ENCODE measurements at regions of chr6 and their contacts with region 1.

Region 1: GRCh38 chr6:109526905-109527628 is 44.0 kb upstream of the ZBTB24 start:
- DNase-seq: peak; percentile 44
- H3K4me3 ChIP-seq: no peak overlapping the region
- H3K27ac ChIP-seq: no peak overlapping the region
- H3K4me1 ChIP-seq: no peaks in the 10 kb centered on the region
- H3K27me3 ChIP-seq: peaks cover 4% of the 10 kb centered on the region
- CTCF ChIP-seq: peak; percentile 34 to 65

Region 2: GRCh38 chr6:107674995-107675738 is 1851.9 kb before region 1 on chr6:
- CTCF ChIA-PET with region 1: no interaction called
- dilution Hi-C with region 1: no loop called
- in situ Hi-C with region 1: no loop called
- intact Hi-C with region 1: no loop called
- DNase-seq: peak; percentile 71
- H3K4me3 ChIP-seq: peak overlapping the region in 2 of 3 experiments; percentile 9 to 42
- H3K27ac ChIP-seq: no peak overlapping the region
- H3K4me1 ChIP-seq: no peaks in the 10 kb centered on the region
- H3K27me3 ChIP-seq: no peaks in the 10 kb centered on the region
- CTCF ChIP-seq: peak; percentile 80 to 93

Region 3: DNA sequence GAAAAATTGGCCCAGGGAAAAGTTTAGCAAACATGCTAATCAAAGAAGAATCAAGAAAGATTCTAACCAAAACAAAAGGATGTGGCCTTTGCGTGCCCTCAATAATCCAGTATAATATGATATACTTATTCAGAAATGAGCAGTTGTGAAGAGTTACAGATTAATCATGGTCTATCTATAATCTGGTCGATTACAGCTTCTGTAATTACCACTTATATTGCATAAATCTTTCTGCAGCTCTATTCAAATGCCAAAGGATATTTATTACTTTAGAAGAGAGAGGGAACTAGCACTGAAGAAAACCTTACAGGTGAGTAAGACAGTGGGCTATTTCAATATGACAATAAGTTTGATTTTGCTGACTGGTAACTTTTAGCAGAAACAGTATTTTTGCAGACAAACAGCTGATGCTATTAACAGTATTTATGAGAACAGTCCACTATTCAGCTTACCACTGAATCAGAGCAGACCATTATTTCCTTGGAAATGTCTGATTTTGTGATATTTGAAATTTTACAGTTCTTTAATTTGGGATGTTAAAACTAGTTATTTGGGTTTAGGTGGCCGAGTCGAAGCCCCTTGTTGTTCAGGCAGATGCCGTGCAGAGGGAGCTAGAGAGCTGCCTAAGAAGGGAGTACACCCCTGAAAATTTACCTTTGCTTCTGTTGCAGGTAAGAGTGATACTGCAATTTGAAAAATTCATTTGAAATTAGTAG is 339.5 kb before region 1 on chr6:
- CTCF ChIA-PET with region 1: no interaction called
- dilution Hi-C with region 1: no loop called
- in situ Hi-C with region 1: no loop called
- intact Hi-C with region 1: loop called (anchors 10 kb)
- DNase-seq: peak; percentile 16
- H3K4me3 ChIP-seq: no peak overlapping the region
- H3K27ac ChIP-seq: no peak overlapping the region
- H3K4me1 ChIP-seq: no peaks in the 10 kb centered on the region
- H3K27me3 ChIP-seq: peaks cover 2% of the 10 kb centered on the region
- CTCF ChIP-seq: peak; percentile 88 to 98

Region 4: DNA sequence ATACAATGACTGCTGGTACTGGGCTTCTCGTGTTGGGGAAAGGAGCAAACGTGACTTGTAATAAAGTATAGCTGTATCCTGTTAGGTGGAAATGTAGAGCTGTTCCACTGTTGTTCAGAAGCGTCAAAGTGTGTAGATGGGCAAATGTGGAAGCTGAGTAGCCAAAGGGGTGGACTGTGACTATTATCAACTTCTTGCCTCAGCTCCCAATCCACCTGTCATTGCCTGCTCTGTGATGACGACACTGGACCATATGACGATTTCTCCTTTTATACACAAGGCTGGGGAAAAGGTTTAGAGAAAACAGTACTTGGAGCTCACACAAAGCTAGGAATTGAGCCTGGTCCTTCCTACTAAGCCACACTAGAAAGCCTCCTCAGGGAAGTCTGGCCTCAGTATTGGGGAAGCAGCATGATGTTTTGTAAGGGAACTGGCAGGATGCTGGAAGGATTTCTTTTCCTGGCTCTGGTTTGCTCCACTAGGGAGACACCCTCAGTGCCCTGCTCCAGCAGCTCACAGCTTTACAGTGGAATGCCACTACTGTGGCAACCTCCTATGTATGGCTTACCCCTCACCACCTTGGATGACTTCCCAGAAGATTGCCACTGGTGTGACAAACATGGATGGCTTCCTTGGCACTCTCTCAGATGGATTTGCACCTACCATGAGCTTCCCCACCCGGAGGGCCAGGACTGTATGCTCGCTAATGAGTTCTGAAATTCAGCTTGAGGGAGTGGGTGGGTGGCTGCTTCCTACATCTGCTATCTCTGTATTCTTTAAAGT is 164.8 kb before region 1 on chr6:
- CTCF ChIA-PET with region 1: no interaction called
- dilution Hi-C with region 1: no loop called
- in situ Hi-C with region 1: no loop called
- intact Hi-C with region 1: no loop called
- DNase-seq: no peak
- H3K4me3 ChIP-seq: no peak overlapping the region
- H3K27ac ChIP-seq: no peak overlapping the region
- H3K4me1 ChIP-seq: no peaks in the 10 kb centered on the region
- H3K27me3 ChIP-seq: no peaks in the 10 kb centered on the region
- CTCF ChIP-seq: no peak

Region 5: GRCh38 chr6:109455502-109456282 is 71.4 kb before region 1 on chr6 and contains the start of gene MICAL1:
- CTCF ChIA-PET with region 1: no interaction called
- dilution Hi-C with region 1: no loop called
- in situ Hi-C with region 1: no loop called
- intact Hi-C with region 1: no loop called
- DNase-seq: peak; percentile 38
- H3K4me3 ChIP-seq: peak within 1 kb of the TSS; percentile 78 to 96 (median 90)
- H3K27ac ChIP-seq: peak within 1 kb of the TSS; percentile 22
- H3K4me1 ChIP-seq: peaks cover 10% of the 10 kb centered on the region
- H3K27me3 ChIP-seq: no peaks in the 10 kb centered on the region
- CTCF ChIP-seq: peak in 1 of 2 donors; percentile 21
- total RNA-seq, gene MICAL1: 36.3 to 44.0 TPM

Region 6: DNA sequence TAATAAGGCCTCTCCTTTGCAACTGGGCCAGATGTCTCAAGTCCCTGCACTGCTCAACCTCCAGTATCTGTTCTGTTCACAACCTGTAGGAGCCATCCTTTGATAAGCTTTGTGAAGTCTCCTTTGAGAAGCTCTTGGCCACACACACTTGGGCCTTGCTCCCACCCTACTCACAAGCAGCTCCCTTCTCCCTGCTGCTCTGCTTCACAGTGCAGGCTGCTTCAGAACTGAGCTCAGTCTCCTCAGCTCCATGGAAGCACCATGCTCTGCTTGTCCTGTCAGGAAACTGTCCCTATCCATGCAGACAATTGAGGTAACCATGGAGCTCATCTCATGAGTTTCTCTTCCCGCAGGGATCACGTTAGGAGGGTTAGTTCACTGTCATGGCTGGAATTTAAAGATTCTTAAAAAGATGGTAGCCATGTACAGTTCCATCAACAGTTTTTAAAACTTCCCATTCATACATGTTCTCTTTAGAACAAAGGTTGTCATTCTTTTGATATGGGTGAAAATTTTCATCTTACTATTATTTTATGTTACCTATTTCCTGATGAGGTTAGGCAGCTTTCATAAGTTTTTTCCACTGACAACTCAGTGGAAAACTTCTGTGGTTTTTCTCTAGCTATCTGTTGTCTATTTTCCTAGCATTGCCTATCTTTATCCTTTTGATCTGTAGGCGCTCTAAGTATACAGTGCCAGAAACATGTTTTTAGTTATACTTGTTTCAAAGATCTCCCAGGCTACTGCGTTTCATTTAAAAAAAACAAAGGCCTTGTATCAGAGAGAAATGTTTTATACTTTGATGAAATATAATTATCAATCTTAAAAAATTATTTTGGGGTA is 101.3 kb after region 1 on chr6:
- CTCF ChIA-PET with region 1: no interaction called
- dilution Hi-C with region 1: no loop called
- in situ Hi-C with region 1: no loop called
- intact Hi-C with region 1: no loop called
- DNase-seq: no peak
- H3K4me3 ChIP-seq: no peak overlapping the region
- H3K27ac ChIP-seq: no peak overlapping the region
- H3K4me1 ChIP-seq: no peaks in the 10 kb centered on the region
- H3K27me3 ChIP-seq: no peaks in the 10 kb centered on the region
- CTCF ChIP-seq: no peak

Region 7: GRCh38 chr6:109690737-109691621 is 163.9 kb after region 1 on chr6 and contains the starts of genes AK9 and FIG4:
- CTCF ChIA-PET with region 1: no interaction called
- dilution Hi-C with region 1: no loop called
- in situ Hi-C with region 1: no loop called
- intact Hi-C with region 1: loop called (anchors 2 kb)
- DNase-seq: peak; percentile 90
- H3K4me3 ChIP-seq: peak within 1 kb of the TSS; percentile 77 to 94 (median 78)
- H3K27ac ChIP-seq: peak within 1 kb of the TSS; percentile 52
- H3K4me1 ChIP-seq: peaks cover 28% of the 10 kb centered on the region
- H3K27me3 ChIP-seq: no peaks in the 10 kb centered on the region
- CTCF ChIP-seq: peak in 1 of 2 donors; percentile 42
- total RNA-seq, gene AK9: 2.2 to 2.4 TPM
- total RNA-seq, gene FIG4: 12.2 to 17.2 TPM

Region 8: GRCh38 chr6:110053395-110054240 is 526.6 kb after region 1 on chr6:
- CTCF ChIA-PET with region 1: no interaction called
- dilution Hi-C with region 1: no loop called
- in situ Hi-C with region 1: loop called (anchors 10 to 25 kb)
- intact Hi-C with region 1: loop called (anchors 1 kb)
- DNase-seq: peak; percentile 29
- H3K4me3 ChIP-seq: no peak overlapping the region
- H3K27ac ChIP-seq: no peak overlapping the region
- H3K4me1 ChIP-seq: no peaks in the 10 kb centered on the region
- H3K27me3 ChIP-seq: peaks cover 7% of the 10 kb centered on the region
- CTCF ChIP-seq: peak; percentile 77 to 78

Region 9: DNA sequence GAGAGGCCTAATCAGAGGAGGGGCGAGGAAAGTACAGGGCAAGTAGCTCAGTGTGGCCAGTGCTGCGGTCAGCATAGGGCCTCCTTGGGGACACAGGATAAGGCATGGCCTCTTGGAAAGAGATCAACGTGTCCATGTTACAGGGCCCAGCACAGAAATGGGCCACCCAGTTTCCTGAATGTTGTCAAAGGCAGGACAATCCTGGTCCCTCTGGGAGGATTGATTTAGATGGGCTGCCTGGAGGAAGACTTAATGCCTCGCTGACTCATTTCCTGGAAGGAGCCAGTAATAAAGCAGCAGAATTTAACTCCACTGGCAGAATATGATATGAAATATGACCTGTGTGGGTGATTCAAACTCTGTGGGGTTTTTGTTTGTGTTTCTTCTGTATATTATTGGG is 871.7 kb after region 1 on chr6:
- CTCF ChIA-PET with region 1: no interaction called
- dilution Hi-C with region 1: no loop called
- in situ Hi-C with region 1: loop called (anchors 10 to 25 kb)
- intact Hi-C with region 1: no loop called
- DNase-seq: peak; percentile 23
- H3K4me3 ChIP-seq: no peak overlapping the region
- H3K27ac ChIP-seq: no peak overlapping the region
- H3K4me1 ChIP-seq: peaks cover 11% of the 10 kb centered on the region
- H3K27me3 ChIP-seq: no peaks in the 10 kb centered on the region
- CTCF ChIP-seq: no peak